ENCODE measurements at regions of chr20 and their contacts with region 1.

Region 1: GRCh38 chr20:51966291-51966971 is 164.1 kb upstream of the SALL4 start:
- DNase-seq: peak; percentile 79
- H3K4me3 Mint-ChIP-seq: no peak overlapping the region
- H3K27ac Mint-ChIP-seq: no peak overlapping the region
- H3K4me1 Mint-ChIP-seq: no peaks in the 10 kb centered on the region
- H3K27me3 Mint-ChIP-seq: no peaks in the 10 kb centered on the region
- CTCF ChIP-seq: peak; percentile 57

Region 2: DNA sequence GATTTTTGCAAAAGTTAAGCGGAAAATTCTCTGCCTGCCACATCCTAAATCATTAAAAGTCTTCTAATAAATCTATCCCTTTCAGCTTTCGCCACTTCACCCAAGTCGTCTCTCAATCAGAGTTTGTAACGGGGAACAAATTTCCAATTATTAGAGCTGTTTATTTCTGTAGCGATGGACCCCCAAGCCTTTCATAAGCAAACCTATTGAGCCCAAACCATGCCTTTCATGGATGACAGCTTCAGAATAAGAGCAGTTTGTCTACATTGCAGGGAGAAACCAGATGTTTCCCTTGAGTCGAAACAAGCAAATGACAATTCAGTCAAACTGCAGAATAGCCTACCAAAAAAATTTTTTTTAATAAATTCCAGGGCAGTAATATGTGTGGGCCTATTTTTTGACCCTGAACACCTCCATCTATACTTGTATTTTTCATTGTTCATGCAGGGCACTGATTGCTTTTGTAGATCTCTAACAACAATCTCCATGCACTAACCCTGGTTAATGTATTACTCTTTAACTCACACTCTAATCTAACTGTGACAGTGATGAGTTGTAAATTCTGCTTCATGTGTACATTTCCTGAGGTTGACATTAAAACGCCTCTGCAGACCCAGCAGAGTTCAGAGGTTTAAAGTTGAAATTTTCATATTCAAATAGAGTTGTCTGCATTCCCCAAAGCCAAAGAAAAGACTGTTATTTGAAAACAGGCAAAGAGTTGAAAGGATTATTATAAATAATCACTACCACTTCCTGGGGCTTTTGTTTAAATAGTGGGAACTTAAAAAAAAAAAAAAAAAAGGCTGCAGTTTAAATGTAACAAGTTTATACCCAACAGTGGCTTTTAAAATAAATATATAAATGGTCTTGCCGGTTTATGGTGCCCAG is 262.8 kb before region 1 on chr20:
- CTCF ChIA-PET with region 1: interaction called, 5 read pairs
- POLR2A ChIA-PET with region 1: no interaction called
- intact Hi-C with region 1: loop called (anchors 10 kb)
- DNase-seq: no peak
- H3K4me3 Mint-ChIP-seq: no peak overlapping the region
- H3K27ac Mint-ChIP-seq: no peak overlapping the region
- H3K4me1 Mint-ChIP-seq: no peaks in the 10 kb centered on the region
- H3K27me3 Mint-ChIP-seq: no peaks in the 10 kb centered on the region
- CTCF ChIP-seq: no peak

Region 3: GRCh38 chr20:51910321-51911053 is 55.9 kb before region 1 on chr20:
- CTCF ChIA-PET with region 1: no interaction called
- POLR2A ChIA-PET with region 1: no interaction called
- intact Hi-C with region 1: no loop called
- DNase-seq: no peak
- H3K4me3 Mint-ChIP-seq: no peak overlapping the region
- H3K27ac Mint-ChIP-seq: no peak overlapping the region
- H3K4me1 Mint-ChIP-seq: peaks cover 8% of the 10 kb centered on the region
- H3K27me3 Mint-ChIP-seq: no peaks in the 10 kb centered on the region
- CTCF ChIP-seq: no peak

Measured in MCF 10A (cell line).